Ascending aorta (tissue), 2 donors: ENCODE measurements at regions of chr12 and their contacts with region 1.

Region 1: GRCh38 chr12:7060353-7060954 is at the start of gene C1S:
- DNase-seq: peak; percentile 57 to 93
- H3K4me3 ChIP-seq: peak within 1 kb of the TSS; percentile 34 to 55
- H3K27ac ChIP-seq: peak within 1 kb of the TSS; percentile 80 to 82
- H3K4me1 ChIP-seq: peaks cover 0 to 17% of the 10 kb centered on the region in 2 donors
- H3K27me3 ChIP-seq: no peaks in the 10 kb centered on the region
- CTCF ChIP-seq: peak; percentile 81 to 92 (median 88)
- total RNA-seq, gene C1S: 273 TPM

Region 2: GRCh38 chr12:6996040-6996441 is 64.4 kb before region 1 on chr12:
- intact Hi-C with region 1: no loop called
- DNase-seq: no peak
- H3K4me3 ChIP-seq: no peak overlapping the region
- H3K27ac ChIP-seq: no peak overlapping the region
- H3K4me1 ChIP-seq: no peaks in the 10 kb centered on the region
- H3K27me3 ChIP-seq: no peaks in the 10 kb centered on the region
- CTCF ChIP-seq: no peak

Region 3: GRCh38 chr12:7079826-7080125 is 19.3 kb after region 1 on chr12:
- intact Hi-C with region 1: loop called (anchors 1 kb)
- DNase-seq: no peak
- H3K4me3 ChIP-seq: no peak overlapping the region
- H3K27ac ChIP-seq: peak overlapping the region; percentile 74 to 83
- H3K4me1 ChIP-seq: peaks cover 3 to 11% of the 10 kb centered on the region in 2 donors
- H3K27me3 ChIP-seq: no peaks in the 10 kb centered on the region
- CTCF ChIP-seq: no peak

Region 4: GRCh38 chr12:7092229-7092985 is 32.0 kb after region 1 on chr12 and contains the start of gene C1R:
- intact Hi-C with region 1: loop called (anchors 1 kb)
- DNase-seq: peak; percentile 48 to 92
- H3K4me3 ChIP-seq: peak within 1 kb of the TSS; percentile 51 to 62
- H3K27ac ChIP-seq: peak within 1 kb of the TSS; percentile 77 to 79
- H3K4me1 ChIP-seq: peaks cover 0 to 12% of the 10 kb centered on the region in 2 donors
- H3K27me3 ChIP-seq: no peaks in the 10 kb centered on the region
- CTCF ChIP-seq: peak; percentile 86 to 91 (median 87)
- total RNA-seq, gene C1R: 1,046 TPM

Region 5: GRCh38 chr12:7188562-7189397 is 128.3 kb after region 1 on chr12:
- intact Hi-C with region 1: loop called (anchors 10 kb)
- DNase-seq: peak; percentile 33 to 88
- H3K4me3 ChIP-seq: peak overlapping the region; percentile 78 to 86
- H3K27ac ChIP-seq: peak overlapping the region; percentile 94 to 98
- H3K4me1 ChIP-seq: peaks cover 0 to 11% of the 10 kb centered on the region in 2 donors
- H3K27me3 ChIP-seq: no peaks in the 10 kb centered on the region
- CTCF ChIP-seq: peak; percentile 30 to 63 (median 59)